SK-N-SH (cell line): ENCODE measurements at regions of chr21 and their contacts with region 1.

Region 1: DNA sequence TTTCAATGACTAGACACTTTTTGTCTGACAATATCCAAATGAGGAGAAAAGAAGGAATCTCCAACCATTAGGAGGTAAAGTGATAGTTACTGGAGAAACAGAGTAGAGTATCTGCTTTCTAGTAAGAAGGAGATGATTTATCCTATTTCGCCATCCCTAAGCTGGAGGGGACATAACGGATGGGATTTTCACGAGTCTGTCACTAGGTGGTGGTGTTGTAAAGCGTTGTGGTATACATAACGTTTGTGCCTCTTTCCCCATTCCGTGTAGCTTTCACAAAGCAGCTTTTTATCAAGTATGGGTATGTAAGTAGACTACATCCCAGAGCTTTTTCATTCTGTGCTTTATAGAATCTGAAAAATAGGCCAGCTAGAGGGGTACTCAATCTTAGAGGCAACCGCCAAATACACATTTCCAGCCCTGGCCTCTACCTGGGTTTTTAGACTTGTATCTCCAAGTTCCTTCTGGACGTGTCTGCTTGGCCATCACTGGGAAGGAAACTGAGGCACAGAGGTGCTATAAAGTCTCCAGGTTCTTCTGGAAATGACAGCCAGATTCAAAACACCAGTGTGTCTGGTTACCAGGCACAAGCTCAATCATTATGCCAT is 33.3 kb upstream of the FAM3B start:
- DNase-seq: peak; percentile 72
- H3K4me3 ChIP-seq: no peak overlapping the region
- H3K27ac ChIP-seq: no peak overlapping the region
- H3K4me1 ChIP-seq: no peaks in the 10 kb centered on the region
- H3K27me3 ChIP-seq: peaks cover 20% of the 10 kb centered on the region; the same call in 1 of the 2 replicates
- CTCF ChIP-seq: peak; percentile 77
- EP300 ChIP-seq: no peak
- RAD21 ChIP-seq: peak; percentile 92

Region 2: DNA sequence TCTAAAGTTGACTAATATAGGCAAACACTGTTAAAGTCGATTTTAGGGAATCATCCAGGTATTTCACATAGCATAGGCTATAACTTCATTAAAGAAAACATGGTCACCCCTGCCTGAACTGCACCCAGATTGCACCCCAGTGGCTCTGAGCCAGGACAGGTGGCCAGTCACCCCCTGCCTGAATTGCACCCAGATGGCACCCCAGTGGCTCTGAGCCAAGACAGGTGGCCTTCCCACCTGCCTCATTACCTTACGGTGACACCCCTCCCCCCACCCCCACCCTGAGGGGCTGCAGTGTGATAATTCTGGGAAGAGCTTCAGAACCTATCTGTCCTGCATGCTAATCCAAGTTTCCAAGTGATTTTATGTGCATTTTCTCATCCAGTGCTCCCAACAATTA is 515.3 kb before region 1 on chr21:
- CTCF ChIA-PET with region 1: no interaction called
- POLR2A ChIA-PET with region 1: no interaction called
- DNase-seq: no peak
- H3K4me3 ChIP-seq: no peak overlapping the region
- H3K27ac ChIP-seq: no peak overlapping the region
- H3K4me1 ChIP-seq: peaks cover 0 to 2% of the 10 kb centered on the region in 2 experiments; a peak in 1 of 4 replicates
- H3K27me3 ChIP-seq: no peaks in the 10 kb centered on the region
- CTCF ChIP-seq: no peak
- EP300 ChIP-seq: no peak
- RAD21 ChIP-seq: no peak

Region 3: GRCh38 chr21:41269535-41269934 is 13.8 kb before region 1 on chr21:
- CTCF ChIA-PET with region 1: interaction called, 30 read pairs
- POLR2A ChIA-PET with region 1: no interaction called
- DNase-seq: no peak
- H3K4me3 ChIP-seq: no peak overlapping the region
- H3K27ac ChIP-seq: no peak overlapping the region
- H3K4me1 ChIP-seq: no peaks in the 10 kb centered on the region
- H3K27me3 ChIP-seq: no peaks in the 10 kb centered on the region
- CTCF ChIP-seq: no peak
- EP300 ChIP-seq: no peak
- RAD21 ChIP-seq: no peak

Region 4: GRCh38 chr21:41411449-41412089 is 128.3 kb after region 1 on chr21:
- CTCF ChIA-PET with region 1: interaction called, 10 read pairs
- POLR2A ChIA-PET with region 1: no interaction called
- DNase-seq: no peak
- H3K4me3 ChIP-seq: no peak overlapping the region
- H3K27ac ChIP-seq: no peak overlapping the region
- H3K4me1 ChIP-seq: no peaks in the 10 kb centered on the region
- H3K27me3 ChIP-seq: peaks cover 5% of the 10 kb centered on the region; the same call in 1 of the 2 replicates
- CTCF ChIP-seq: no peak; the same call in 1 of the 2 replicates
- EP300 ChIP-seq: no peak
- RAD21 ChIP-seq: no peak

Region 5: DNA sequence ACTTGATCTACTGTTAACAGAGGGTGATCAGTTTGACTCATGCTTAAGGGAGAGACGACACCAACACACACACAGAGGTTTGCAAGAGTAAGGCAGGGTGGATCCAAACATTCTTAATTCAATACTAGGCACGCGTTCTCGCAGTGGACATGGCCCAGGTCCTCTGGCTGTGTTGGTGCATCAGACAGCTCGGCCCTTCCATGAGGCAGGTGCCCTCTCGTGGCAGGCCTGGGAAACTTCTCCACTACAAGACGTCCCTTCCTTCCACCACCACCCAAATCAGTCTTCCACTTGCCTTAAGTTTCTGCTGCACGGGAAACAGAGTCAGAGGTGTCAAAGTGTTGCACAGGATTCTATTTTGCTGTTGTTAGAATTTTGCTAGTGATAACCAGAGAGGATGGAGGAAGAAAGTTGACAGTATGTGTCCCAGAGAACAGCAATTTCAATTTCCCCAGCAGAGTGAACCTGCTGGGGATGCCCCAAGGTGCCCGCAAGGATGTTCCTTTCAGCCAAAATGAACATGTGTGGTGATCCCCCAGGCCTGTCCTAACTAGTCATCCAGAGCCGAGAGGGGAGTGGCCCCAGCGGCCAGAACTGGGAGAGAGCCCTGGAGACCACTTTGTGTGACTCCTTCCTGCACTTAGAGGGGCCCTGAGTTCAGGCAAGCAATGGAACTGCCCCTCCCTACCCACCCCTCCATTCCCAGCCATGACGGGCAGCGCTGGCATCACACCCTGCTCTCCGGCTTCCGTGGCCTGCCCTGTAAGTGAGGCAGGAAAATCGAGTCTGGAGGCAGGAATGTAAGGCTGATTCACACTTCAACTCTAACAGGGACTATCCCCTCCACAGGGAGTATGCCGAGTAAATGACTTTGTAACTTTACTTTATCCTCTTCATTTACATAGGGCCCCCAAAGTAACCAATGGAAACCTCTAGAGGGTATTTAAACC is 177.5 kb after region 1 on chr21:
- CTCF ChIA-PET with region 1: interaction called, 122 read pairs
- POLR2A ChIA-PET with region 1: no interaction called
- DNase-seq: peak; percentile 73
- H3K4me3 ChIP-seq: no peak overlapping the region
- H3K27ac ChIP-seq: no peak overlapping the region
- H3K4me1 ChIP-seq: no peaks in the 10 kb centered on the region
- H3K27me3 ChIP-seq: no peaks in the 10 kb centered on the region
- CTCF ChIP-seq: peak; percentile 77
- EP300 ChIP-seq: no peak
- RAD21 ChIP-seq: peak; percentile 73